ENCODE measurements at regions of chr14 and their contacts with region 1.

Region 1: GRCh38 chr14:87896393-87897380 is 96.3 kb downstream of the GALC start:
- DNase-seq: no peak
- H3K4me3 ChIP-seq: no peak overlapping the region
- H3K27ac ChIP-seq: no peak overlapping the region
- H3K4me1 ChIP-seq: peaks cover 0 to 13% of the 10 kb centered on the region in 2 donors
- H3K27me3 ChIP-seq: no peaks in the 10 kb centered on the region
- CTCF ChIP-seq: peak; percentile 27 to 84 (median 72)
- POLR2A ChIP-seq: no peak

Region 2: GRCh38 chr14:87745507-87746118 is 151.1 kb before region 1 on chr14:
- intact Hi-C with region 1: loop called (anchors 5 kb)
- DNase-seq: peak; percentile 48 to 51
- H3K4me3 ChIP-seq: no peak overlapping the region
- H3K27ac ChIP-seq: no peak overlapping the region
- H3K4me1 ChIP-seq: no peaks in the 10 kb centered on the region
- H3K27me3 ChIP-seq: no peaks in the 10 kb centered on the region
- CTCF ChIP-seq: peak; percentile 32 to 77 (median 66)
- POLR2A ChIP-seq: no peak

Region 3: DNA sequence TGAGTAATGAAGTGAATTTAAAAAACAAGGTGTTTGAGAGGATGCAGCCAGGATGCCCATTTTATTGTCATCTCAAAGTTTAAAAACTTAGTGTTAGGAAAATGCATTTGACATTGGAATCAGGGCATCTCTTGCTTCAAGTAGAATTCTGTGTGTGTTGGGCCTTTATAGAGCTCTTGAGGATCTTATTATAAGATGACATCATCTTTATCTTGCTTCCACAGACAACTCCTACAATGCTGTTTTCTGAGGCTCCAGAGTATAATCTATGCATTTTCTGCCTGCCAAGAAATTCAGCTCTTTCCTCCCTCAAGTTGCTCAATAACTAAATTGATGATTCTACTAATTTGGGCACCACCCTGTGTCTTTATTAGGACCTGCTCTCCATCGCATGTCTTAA is 93.8 kb before region 1 on chr14:
- intact Hi-C with region 1: loop called (anchors 5 kb)
- DNase-seq: no peak
- H3K4me3 ChIP-seq: no peak overlapping the region
- H3K27ac ChIP-seq: no peak overlapping the region
- H3K4me1 ChIP-seq: no peaks in the 10 kb centered on the region
- H3K27me3 ChIP-seq: no peaks in the 10 kb centered on the region
- CTCF ChIP-seq: no peak
- POLR2A ChIP-seq: no peak

Region 4: GRCh38 chr14:88044851-88045339 is 148.2 kb after region 1 on chr14:
- intact Hi-C with region 1: no loop called
- DNase-seq: no peak
- H3K4me3 ChIP-seq: no peak overlapping the region
- H3K27ac ChIP-seq: no peak overlapping the region
- H3K4me1 ChIP-seq: no peaks in the 10 kb centered on the region
- H3K27me3 ChIP-seq: no peaks in the 10 kb centered on the region
- CTCF ChIP-seq: no peak
- POLR2A ChIP-seq: no peak

Measured in thyroid gland (tissue), 4 donors.